Activated naive CD4-positive, alpha-beta T cell treated with anti-CD3 and anti-CD28 coated beads for 36 hours (primary cell): ENCODE measurements at regions of chr1 and their contacts with region 1.

Region 1: DNA sequence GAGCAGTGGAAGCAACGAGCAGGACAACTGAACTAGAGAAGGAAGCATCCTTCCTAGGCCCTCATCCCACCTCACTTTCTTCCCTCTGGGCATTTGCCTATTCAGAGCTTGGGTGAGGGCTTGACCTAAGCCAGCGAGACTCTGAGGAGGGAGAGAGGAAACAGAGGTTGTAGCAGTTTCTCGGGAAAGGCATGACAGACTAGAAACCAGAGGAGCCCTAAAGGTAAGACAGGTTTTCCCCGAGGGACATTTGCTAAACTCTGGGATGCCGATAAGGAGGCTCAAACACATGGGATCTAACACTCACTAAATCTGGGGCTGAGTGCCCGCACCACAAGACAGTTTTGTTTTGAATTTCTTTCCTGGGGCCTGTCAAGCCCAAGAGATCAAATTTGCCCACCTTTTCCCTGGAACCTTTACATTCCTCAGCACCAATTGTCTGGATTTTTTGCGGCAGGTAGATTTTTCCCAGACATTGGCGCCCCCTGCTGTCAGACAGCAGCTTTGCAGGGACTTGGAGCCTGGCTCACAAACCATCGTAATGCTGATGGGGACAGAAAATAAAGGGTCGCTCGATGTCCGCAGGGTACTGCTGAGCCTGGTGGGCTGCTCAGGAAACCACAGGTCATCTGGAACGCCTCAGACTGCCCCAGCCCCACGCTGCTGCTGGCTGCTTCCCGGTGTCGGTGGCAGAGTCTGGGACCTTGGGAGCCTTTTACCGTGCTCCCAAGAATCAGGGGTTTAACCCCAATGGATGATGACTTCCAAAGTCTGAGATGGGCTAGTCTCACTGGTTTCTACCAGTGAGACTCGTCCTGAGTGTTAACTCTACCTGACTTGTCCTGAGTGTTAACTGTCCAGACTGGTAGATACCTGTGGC is 23.4 kb upstream of the TSPAN2 start:
- DNase-seq: peak; percentile 55
- H3K4me3 Mint-ChIP-seq: no peak overlapping the region
- H3K27ac Mint-ChIP-seq: no peak overlapping the region
- H3K4me1 Mint-ChIP-seq: peaks cover 8% of the 10 kb centered on the region
- H3K27me3 Mint-ChIP-seq: no peaks in the 10 kb centered on the region

Region 2: GRCh38 chr1:115052454-115053083 is 60.2 kb before region 1 on chr1:
- CTCF ChIA-PET with region 1: interaction called, 28 read pairs
- intact Hi-C with region 1: loop called (anchors 2 kb)
- DNase-seq: peak; percentile 73
- H3K4me3 Mint-ChIP-seq: no peak overlapping the region
- H3K27ac Mint-ChIP-seq: no peak overlapping the region
- H3K4me1 Mint-ChIP-seq: no peaks in the 10 kb centered on the region
- H3K27me3 Mint-ChIP-seq: no peaks in the 10 kb centered on the region